Vagina (tissue), 2 donors: ENCODE measurements at regions of chr17 and their contacts with region 1.

Region 1: GRCh38 chr17:69363488-69364210 is 36.7 kb upstream of the ABCA5 start:
- DNase-seq: no peak
- H3K4me3 ChIP-seq: no peak overlapping the region
- H3K27ac ChIP-seq: no peak overlapping the region
- H3K4me1 ChIP-seq: no peaks in the 10 kb centered on the region
- H3K27me3 ChIP-seq: no peaks in the 10 kb centered on the region
- CTCF ChIP-seq: no peak
- POLR2A ChIP-seq: no peak

Region 2: DNA sequence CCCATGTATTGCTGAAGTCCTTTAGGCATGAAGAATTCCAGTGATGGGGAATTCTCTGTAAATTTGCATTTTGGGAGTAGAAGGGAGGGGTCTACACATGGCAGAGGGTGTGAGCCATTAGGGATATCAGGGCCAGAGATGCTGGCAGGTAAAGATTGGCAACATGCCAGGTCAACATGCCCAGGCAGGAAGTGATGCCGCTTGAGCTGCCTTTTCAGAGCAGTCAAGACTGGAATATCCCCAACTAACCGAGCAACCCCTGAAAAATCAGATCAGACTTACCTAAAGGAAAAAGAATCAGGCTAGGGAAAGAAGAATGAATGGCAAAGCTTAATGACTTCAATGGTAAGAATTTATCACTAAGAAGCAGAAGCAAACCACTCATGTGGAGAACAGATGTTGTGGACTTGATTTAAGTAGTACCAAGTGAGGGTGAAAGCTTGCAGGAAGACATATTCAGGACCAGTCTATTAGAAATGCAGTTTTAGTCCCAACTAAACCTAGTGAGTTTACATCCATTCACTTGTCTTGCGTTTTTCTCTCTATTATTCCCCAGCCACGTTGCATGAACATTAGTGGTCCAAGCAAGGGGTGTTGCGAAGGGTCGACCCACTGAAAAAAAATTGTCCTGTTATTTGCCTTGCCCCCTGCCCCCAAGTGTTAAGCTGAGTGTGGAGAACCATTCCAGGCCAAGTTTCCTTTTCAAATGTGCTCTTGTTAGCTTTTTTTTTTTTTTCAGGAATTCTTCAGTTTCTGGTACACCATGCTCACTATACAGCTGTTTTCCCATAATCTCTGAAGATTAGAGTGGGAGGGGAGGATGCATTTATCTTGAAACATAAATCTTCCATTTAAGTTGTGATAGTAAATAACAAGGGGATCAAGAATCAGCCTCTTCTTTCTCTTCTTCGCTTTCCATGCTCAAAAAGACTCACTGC is 513.7 kb before region 1 on chr17:
- intact Hi-C with region 1: loop called (anchors 5 kb)
- DNase-seq: no peak
- H3K4me3 ChIP-seq: no peak overlapping the region
- H3K27ac ChIP-seq: peak overlapping the region; percentile 5
- H3K4me1 ChIP-seq: peaks cover 31% of the 10 kb centered on the region
- H3K27me3 ChIP-seq: no peaks in the 10 kb centered on the region
- CTCF ChIP-seq: no peak
- POLR2A ChIP-seq: no peak

Region 3: GRCh38 chr17:69327060-69327831 is 36.4 kb before region 1 on chr17 and contains the start of gene ABCA5:
- intact Hi-C with region 1: no loop called
- DNase-seq: peak in 1 of 2 donors; percentile 88
- H3K4me3 ChIP-seq: peak within 1 kb of the TSS; percentile 75 to 92
- H3K27ac ChIP-seq: peak within 1 kb of the TSS; percentile 97
- H3K4me1 ChIP-seq: no peaks in the 10 kb centered on the region
- H3K27me3 ChIP-seq: no peaks in the 10 kb centered on the region
- CTCF ChIP-seq: no peak
- POLR2A ChIP-seq: peak in 1 of 2 donors; percentile 82
- total RNA-seq, gene ABCA5: 50.6 TPM